HEK293T (cell line): ENCODE measurements at regions of chr7 and their contacts with region 1.

Region 1: GRCh38 chr7:139075031-139075652 is 34.4 kb downstream of the ZC3HAV1 start:
- DNase-seq: peak; percentile 83

Region 2: GRCh38 chr7:138886501-138886917 is 188.6 kb before region 1 on chr7:
- CTCF ChIA-PET with region 1: interaction called, 16 read pairs
- POLR2A ChIA-PET with region 1: no interaction called
- DNase-seq: peak; percentile 65

Region 3: GRCh38 chr7:138961159-138961558 is 114.0 kb before region 1 on chr7:
- CTCF ChIA-PET with region 1: no interaction called
- POLR2A ChIA-PET with region 1: no interaction called
- DNase-seq: no peak

Region 4: GRCh38 chr7:139016931-139017511 is 58.1 kb before region 1 on chr7:
- CTCF ChIA-PET with region 1: interaction called, 15 read pairs
- POLR2A ChIA-PET with region 1: no interaction called
- DNase-seq: peak; percentile 90

Region 5: DNA sequence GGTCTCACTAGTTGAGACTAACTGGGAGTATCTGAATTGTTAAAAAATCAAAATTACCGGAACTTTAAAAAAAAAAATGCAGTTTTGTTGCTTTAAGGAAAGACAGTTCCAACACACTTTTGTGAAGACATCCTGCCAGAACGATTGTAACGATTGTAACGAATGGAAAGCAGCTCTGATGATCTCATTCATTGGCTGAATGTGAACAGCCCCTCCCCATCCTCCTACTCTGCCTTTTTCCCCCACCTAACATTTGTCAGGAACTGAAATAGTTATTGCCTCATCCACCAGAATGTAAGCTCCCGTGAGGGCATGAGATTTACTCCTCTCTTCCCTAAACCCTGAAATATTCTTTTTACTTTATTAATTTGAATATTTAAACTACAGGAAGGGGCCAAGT is 16.2 kb before region 1 on chr7:
- CTCF ChIA-PET with region 1: interaction called, 19 read pairs
- POLR2A ChIA-PET with region 1: no interaction called
- DNase-seq: no peak

Region 6: DNA sequence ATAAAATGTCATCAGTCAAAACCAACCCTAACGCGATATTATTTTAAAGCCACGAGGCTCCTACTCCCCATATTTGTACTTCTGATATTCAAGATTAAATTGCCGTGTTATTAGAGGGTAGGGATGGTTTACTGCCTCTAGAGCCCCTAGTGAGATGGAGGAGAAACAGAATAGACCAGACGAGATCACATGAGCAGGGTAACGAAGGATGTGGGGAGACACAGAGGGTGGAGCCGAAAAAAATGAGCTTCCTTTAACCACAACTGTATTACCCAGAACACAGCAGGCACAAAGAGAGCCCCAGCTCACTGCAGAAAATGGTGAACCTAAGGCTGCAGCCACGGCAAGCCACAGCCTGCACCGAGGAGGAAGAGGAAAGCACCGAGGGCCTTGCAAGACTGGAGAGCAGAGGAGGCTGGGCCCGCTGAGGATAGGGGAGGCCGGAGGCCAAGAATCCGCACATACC is 20.1 kb after region 1 on chr7:
- CTCF ChIA-PET with region 1: interaction called, 10 read pairs
- POLR2A ChIA-PET with region 1: no interaction called
- DNase-seq: no peak